Mammary epithelial cell (primary cell): ENCODE measurements at regions of chr12 and their contacts with region 1.

Region 1: GRCh38 chr12:101830367-101831325 is at the start of gene GNPTAB:
- DNase-seq: peak; percentile 86
- H3K4me3 ChIP-seq: peak within 1 kb of the TSS; percentile 98 to 100 (median 99)
- H3K27ac ChIP-seq: peak within 1 kb of the TSS; percentile 47
- H3K4me1 ChIP-seq: peaks cover 5% of the 10 kb centered on the region
- H3K27me3 ChIP-seq: no peaks in the 10 kb centered on the region
- CTCF ChIP-seq: peak; percentile 41 to 64
- total RNA-seq, gene GNPTAB: 36.1 to 52.2 TPM

Region 2: GRCh38 chr12:101407436-101408345 is 423.0 kb before region 1 on chr12 and contains the start of gene ARL1:
- CTCF ChIA-PET with region 1: no interaction called
- dilution Hi-C with region 1: no loop called
- in situ Hi-C with region 1: loop called (anchors 10 to 25 kb)
- intact Hi-C with region 1: loop called (anchors 5 kb)
- DNase-seq: peak; percentile 88
- H3K4me3 ChIP-seq: peak within 1 kb of the TSS; percentile 72 to 99 (median 88)
- H3K27ac ChIP-seq: peak within 1 kb of the TSS; percentile 98
- H3K4me1 ChIP-seq: peaks cover 24% of the 10 kb centered on the region
- H3K27me3 ChIP-seq: no peaks in the 10 kb centered on the region
- CTCF ChIP-seq: no peak
- total RNA-seq, gene ARL1: 64.0 to 93.5 TPM

Region 3: GRCh38 chr12:101570047-101570446 is 260.6 kb before region 1 on chr12:
- CTCF ChIA-PET with region 1: no interaction called
- dilution Hi-C with region 1: no loop called
- in situ Hi-C with region 1: no loop called
- intact Hi-C with region 1: loop called (anchors 5 kb)
- DNase-seq: peak; percentile 24
- H3K4me3 ChIP-seq: no peak overlapping the region
- H3K27ac ChIP-seq: no peak overlapping the region
- H3K4me1 ChIP-seq: no peaks in the 10 kb centered on the region
- H3K27me3 ChIP-seq: no peaks in the 10 kb centered on the region
- CTCF ChIP-seq: peak; percentile 8 to 35

Region 4: GRCh38 chr12:101773650-101774162 is 56.9 kb before region 1 on chr12:
- CTCF ChIA-PET with region 1: interaction called, 21 read pairs
- dilution Hi-C with region 1: no loop called
- in situ Hi-C with region 1: no loop called
- intact Hi-C with region 1: loop called (anchors 1 kb)
- DNase-seq: peak; percentile 57
- H3K4me3 ChIP-seq: no peak overlapping the region
- H3K27ac ChIP-seq: no peak overlapping the region
- H3K4me1 ChIP-seq: no peaks in the 10 kb centered on the region
- H3K27me3 ChIP-seq: no peaks in the 10 kb centered on the region
- CTCF ChIP-seq: peak; percentile 83 to 96

Region 5: GRCh38 chr12:101792051-101792931 is 38.4 kb before region 1 on chr12:
- CTCF ChIA-PET with region 1: no interaction called
- dilution Hi-C with region 1: no loop called
- in situ Hi-C with region 1: loop called in 1 of 2 experiments (anchors 10 kb)
- intact Hi-C with region 1: loop called (anchors 2 kb)
- DNase-seq: no peak
- H3K4me3 ChIP-seq: no peak overlapping the region
- H3K27ac ChIP-seq: no peak overlapping the region
- H3K4me1 ChIP-seq: no peaks in the 10 kb centered on the region
- H3K27me3 ChIP-seq: no peaks in the 10 kb centered on the region
- CTCF ChIP-seq: peak; percentile 19 to 52